CD4-positive, alpha-beta T cell (primary cell): ENCODE measurements at regions of chr9 and their contacts with region 1.

Region 1: GRCh38 chr9:127970401-127971313 is 10.1 kb downstream of the EEIG1 start:
- DNase-seq: peak; percentile 50 to 85 (median 70)
- ATAC-seq: peak; percentile 69
- H3K4me3 ChIP-seq: peak overlapping the region; percentile 67
- H3K4me3 Mint-ChIP-seq: peak overlapping the region; percentile 91
- H3K27ac ChIP-seq: peak overlapping the region; percentile 60 to 96
- H3K27ac Mint-ChIP-seq: peak overlapping the region; percentile 97
- H3K4me1 ChIP-seq: peaks cover 100% of the 10 kb centered on the region
- H3K4me1 Mint-ChIP-seq: peaks cover 100% of the 10 kb centered on the region
- H3K27me3 ChIP-seq: no peaks in the 10 kb centered on the region
- H3K27me3 Mint-ChIP-seq: no peaks in the 10 kb centered on the region
- CTCF ChIP-seq: no peak

Region 2: DNA sequence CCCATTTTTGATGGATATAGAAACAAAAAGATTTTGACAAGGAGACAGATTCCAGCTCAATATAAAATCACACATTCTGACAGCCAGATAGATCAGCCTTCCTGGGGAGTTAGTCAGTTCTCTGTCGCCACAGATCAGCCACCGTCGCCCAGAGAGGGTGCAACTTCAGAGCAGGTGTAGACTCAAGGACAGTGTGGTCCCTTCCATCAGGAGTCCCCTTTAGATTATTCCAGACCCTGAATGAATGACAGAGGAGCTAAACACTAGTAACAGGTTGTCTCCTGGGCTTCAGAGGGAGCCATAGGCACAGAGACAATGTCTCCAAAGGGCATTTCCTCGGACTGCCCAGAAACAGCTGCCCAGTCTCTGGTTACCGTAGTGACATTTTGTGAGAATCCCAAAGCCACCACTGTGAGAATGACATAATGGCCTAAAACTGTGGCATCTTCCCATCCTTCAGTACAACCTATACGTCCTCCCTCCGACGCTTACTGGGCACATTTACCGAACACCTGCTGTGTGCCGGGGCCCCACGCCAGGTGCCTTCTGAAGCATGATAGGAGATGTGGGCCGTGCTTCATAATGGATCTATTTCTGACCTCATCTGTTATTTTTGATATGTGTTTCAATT is 621.1 kb before region 1 on chr9:
- CTCF ChIA-PET with region 1: no interaction called
- POLR2A ChIA-PET with region 1: no interaction called
- intact Hi-C with region 1: no loop called
- DNase-seq: no peak
- ATAC-seq: no peak
- H3K4me3 ChIP-seq: no peak overlapping the region
- H3K4me3 Mint-ChIP-seq: no peak overlapping the region
- H3K27ac ChIP-seq: no peak overlapping the region
- H3K27ac Mint-ChIP-seq: no peak overlapping the region
- H3K4me1 ChIP-seq: no peaks in the 10 kb centered on the region
- H3K4me1 Mint-ChIP-seq: no peaks in the 10 kb centered on the region
- H3K27me3 ChIP-seq: peaks cover 5 to 11% of the 10 kb centered on the region in 2 experiments
- H3K27me3 Mint-ChIP-seq: peaks cover 66% of the 10 kb centered on the region
- CTCF ChIP-seq: no peak

Region 3: DNA sequence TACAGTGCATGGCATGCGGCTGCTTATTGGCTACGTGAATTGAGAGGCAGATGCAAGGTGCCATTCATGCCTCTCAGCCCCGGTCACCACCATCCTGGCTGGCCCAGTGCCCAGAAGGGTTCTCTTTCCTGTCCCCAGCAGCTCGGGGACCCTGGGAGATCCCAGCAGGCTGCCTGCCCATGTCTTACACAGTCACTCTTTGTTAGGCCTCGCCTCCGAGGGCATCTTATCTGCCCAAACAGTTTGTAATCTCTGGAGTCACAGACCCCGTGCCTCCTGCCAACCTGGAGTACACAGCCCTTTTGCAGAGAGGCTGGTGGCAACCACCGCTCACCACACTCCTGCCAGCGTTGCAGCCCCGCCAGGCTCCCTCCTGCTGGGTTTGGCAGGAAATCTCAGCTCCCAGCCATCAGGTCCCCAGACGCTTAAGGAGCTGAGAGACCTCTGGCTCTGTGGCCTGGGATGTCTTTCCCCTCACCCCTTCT is 86.2 kb before region 1 on chr9:
- CTCF ChIA-PET with region 1: no interaction called
- POLR2A ChIA-PET with region 1: no interaction called
- intact Hi-C with region 1: no loop called
- DNase-seq: no peak
- ATAC-seq: no peak
- H3K4me3 ChIP-seq: no peak overlapping the region
- H3K4me3 Mint-ChIP-seq: no peak overlapping the region
- H3K27ac ChIP-seq: no peak overlapping the region
- H3K27ac Mint-ChIP-seq: peak overlapping the region; percentile 44
- H3K4me1 ChIP-seq: peaks cover 6% of the 10 kb centered on the region
- H3K4me1 Mint-ChIP-seq: peaks cover 5% of the 10 kb centered on the region
- H3K27me3 ChIP-seq: no peaks in the 10 kb centered on the region
- H3K27me3 Mint-ChIP-seq: no peaks in the 10 kb centered on the region
- CTCF ChIP-seq: no peak

Region 4: GRCh38 chr9:127937388-127938280 is 33.0 kb before region 1 on chr9 and contains the start of gene DPM2:
- CTCF ChIA-PET with region 1: interaction called, 13 read pairs
- POLR2A ChIA-PET with region 1: interaction called, 12 read pairs
- intact Hi-C with region 1: loop called in 1 of 2 experiments (anchors 5 kb)
- DNase-seq: peak; percentile 74 to 94 (median 84)
- ATAC-seq: peak; percentile 85
- H3K4me3 ChIP-seq: peak within 1 kb of the TSS; percentile 90
- H3K4me3 Mint-ChIP-seq: peak within 1 kb of the TSS; percentile 93
- H3K27ac ChIP-seq: peak within 1 kb of the TSS; percentile 48 to 80
- H3K27ac Mint-ChIP-seq: peak within 1 kb of the TSS; percentile 88
- H3K4me1 ChIP-seq: peaks cover 47% of the 10 kb centered on the region
- H3K4me1 Mint-ChIP-seq: peaks cover 63% of the 10 kb centered on the region
- H3K27me3 ChIP-seq: no peaks in the 10 kb centered on the region
- H3K27me3 Mint-ChIP-seq: no peaks in the 10 kb centered on the region
- CTCF ChIP-seq: no peak
- total RNA-seq, gene DPM2: 41.7 to 47.6 TPM

Region 5: GRCh38 chr9:127943731-127944144 is 26.9 kb before region 1 on chr9:
- CTCF ChIA-PET with region 1: interaction called, 13 read pairs
- POLR2A ChIA-PET with region 1: interaction called, 12 read pairs
- intact Hi-C with region 1: loop called in 1 of 2 experiments (anchors 5 kb)
- DNase-seq: peak; percentile 59 to 89 (median 72)
- ATAC-seq: peak; percentile 74
- H3K4me3 ChIP-seq: no peak overlapping the region
- H3K4me3 Mint-ChIP-seq: peak overlapping the region; percentile 12
- H3K27ac ChIP-seq: peak overlapping the region in 1 of 2 donors; percentile 14
- H3K27ac Mint-ChIP-seq: peak overlapping the region; percentile 88
- H3K4me1 ChIP-seq: peaks cover 58% of the 10 kb centered on the region
- H3K4me1 Mint-ChIP-seq: peaks cover 58% of the 10 kb centered on the region
- H3K27me3 ChIP-seq: no peaks in the 10 kb centered on the region
- H3K27me3 Mint-ChIP-seq: no peaks in the 10 kb centered on the region
- CTCF ChIP-seq: peak; percentile 77

Region 6: GRCh38 chr9:127960410-127961154 is 10.1 kb before region 1 on chr9:
- CTCF ChIA-PET with region 1: interaction called, 17 read pairs
- POLR2A ChIA-PET with region 1: interaction called, 272 read pairs
- intact Hi-C with region 1: loop called in 1 of 2 experiments (anchors 1 kb)
- DNase-seq: no peak
- ATAC-seq: no peak
- H3K4me3 ChIP-seq: no peak overlapping the region
- H3K4me3 Mint-ChIP-seq: peak overlapping the region; percentile 79
- H3K27ac ChIP-seq: peak overlapping the region; percentile 54 to 58
- H3K27ac Mint-ChIP-seq: peak overlapping the region; percentile 97
- H3K4me1 ChIP-seq: peaks cover 85% of the 10 kb centered on the region
- H3K4me1 Mint-ChIP-seq: peaks cover 96% of the 10 kb centered on the region
- H3K27me3 ChIP-seq: no peaks in the 10 kb centered on the region
- H3K27me3 Mint-ChIP-seq: no peaks in the 10 kb centered on the region
- CTCF ChIP-seq: no peak

Region 7: GRCh38 chr9:127980706-127981558 is 10.3 kb after region 1 on chr9 and contains the start of gene EEIG1:
- CTCF ChIA-PET with region 1: interaction called, 3 read pairs
- POLR2A ChIA-PET with region 1: interaction called, 110 read pairs
- intact Hi-C with region 1: loop called in 1 of 2 experiments (anchors 1 kb)
- DNase-seq: peak; percentile 95 to 99 (median 97)
- ATAC-seq: peak; percentile 88
- H3K4me3 ChIP-seq: peak within 1 kb of the TSS; percentile 67
- H3K4me3 Mint-ChIP-seq: peak within 1 kb of the TSS; percentile 96
- H3K27ac ChIP-seq: peak within 1 kb of the TSS; percentile 53 to 57
- H3K27ac Mint-ChIP-seq: peak within 1 kb of the TSS; percentile 99
- H3K4me1 ChIP-seq: peaks cover 58% of the 10 kb centered on the region
- H3K4me1 Mint-ChIP-seq: peaks cover 47% of the 10 kb centered on the region
- H3K27me3 ChIP-seq: no peaks in the 10 kb centered on the region
- H3K27me3 Mint-ChIP-seq: no peaks in the 10 kb centered on the region
- CTCF ChIP-seq: no peak
- total RNA-seq, gene EEIG1: 440 to 463 TPM

Region 8: GRCh38 chr9:128007566-128008138 is 37.0 kb after region 1 on chr9:
- CTCF ChIA-PET with region 1: no interaction called
- POLR2A ChIA-PET with region 1: interaction called, 168 read pairs
- intact Hi-C with region 1: loop called in 1 of 2 experiments (anchors 1 kb)
- DNase-seq: peak; percentile 82 to 97 (median 91)
- ATAC-seq: peak; percentile 87
- H3K4me3 ChIP-seq: peak overlapping the region; percentile 37
- H3K4me3 Mint-ChIP-seq: peak overlapping the region; percentile 76
- H3K27ac ChIP-seq: peak overlapping the region; percentile 65 to 97
- H3K27ac Mint-ChIP-seq: peak overlapping the region; percentile 96
- H3K4me1 ChIP-seq: peaks cover 89% of the 10 kb centered on the region
- H3K4me1 Mint-ChIP-seq: peaks cover 81% of the 10 kb centered on the region
- H3K27me3 ChIP-seq: no peaks in the 10 kb centered on the region
- H3K27me3 Mint-ChIP-seq: no peaks in the 10 kb centered on the region
- CTCF ChIP-seq: no peak

Region 9: DNA sequence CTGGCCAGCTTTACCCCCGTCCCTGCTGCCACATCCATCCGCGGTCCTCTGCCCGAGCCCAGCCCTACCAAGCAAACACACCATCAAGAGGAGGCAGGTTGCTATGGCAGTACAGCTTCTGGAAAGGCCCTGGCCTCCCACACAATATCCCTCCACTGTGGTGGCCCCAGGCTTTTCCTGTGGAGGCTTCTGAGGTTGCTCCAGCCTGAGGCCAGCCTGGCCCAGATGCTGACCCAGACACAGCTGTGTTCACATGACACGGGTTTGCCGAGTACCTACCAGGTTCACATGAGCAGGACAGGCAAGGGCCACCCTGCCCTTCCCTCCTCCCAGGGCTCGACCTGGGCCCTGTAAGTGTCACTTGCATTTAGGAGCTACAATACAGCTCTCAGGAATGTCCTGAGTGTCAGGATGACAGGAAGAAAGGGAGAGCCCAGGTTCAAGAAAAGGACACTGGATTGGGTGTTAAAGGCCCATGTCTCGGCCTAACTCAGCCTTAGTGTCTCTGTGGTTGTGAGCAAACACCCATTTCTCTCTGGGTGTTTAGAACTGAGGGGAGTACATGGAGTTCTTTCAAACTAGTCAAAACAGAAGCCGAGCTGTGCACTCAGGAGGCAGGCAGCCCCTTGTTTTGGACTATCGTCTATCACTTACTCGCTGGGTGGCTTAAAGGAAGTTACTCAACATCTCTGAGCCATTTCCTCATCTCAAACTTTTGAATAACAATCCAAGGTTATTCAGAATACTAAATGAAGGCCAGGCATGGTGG is 56.3 kb after region 1 on chr9:
- CTCF ChIA-PET with region 1: interaction called, 4 read pairs
- POLR2A ChIA-PET with region 1: interaction called, 1,020 read pairs
- intact Hi-C with region 1: loop called in 1 of 2 experiments (anchors 2 kb)
- DNase-seq: peak in 13 of 14 experiments; percentile 30 to 75 (median 48)
- ATAC-seq: peak; percentile 10
- H3K4me3 ChIP-seq: peak overlapping the region; percentile 50
- H3K4me3 Mint-ChIP-seq: peak overlapping the region; percentile 80
- H3K27ac ChIP-seq: peak overlapping the region; percentile 93 to 94
- H3K27ac Mint-ChIP-seq: peak overlapping the region; percentile 94
- H3K4me1 ChIP-seq: peaks cover 100% of the 10 kb centered on the region
- H3K4me1 Mint-ChIP-seq: peaks cover 92% of the 10 kb centered on the region
- H3K27me3 ChIP-seq: no peaks in the 10 kb centered on the region
- H3K27me3 Mint-ChIP-seq: no peaks in the 10 kb centered on the region
- CTCF ChIP-seq: no peak

Region 10: DNA sequence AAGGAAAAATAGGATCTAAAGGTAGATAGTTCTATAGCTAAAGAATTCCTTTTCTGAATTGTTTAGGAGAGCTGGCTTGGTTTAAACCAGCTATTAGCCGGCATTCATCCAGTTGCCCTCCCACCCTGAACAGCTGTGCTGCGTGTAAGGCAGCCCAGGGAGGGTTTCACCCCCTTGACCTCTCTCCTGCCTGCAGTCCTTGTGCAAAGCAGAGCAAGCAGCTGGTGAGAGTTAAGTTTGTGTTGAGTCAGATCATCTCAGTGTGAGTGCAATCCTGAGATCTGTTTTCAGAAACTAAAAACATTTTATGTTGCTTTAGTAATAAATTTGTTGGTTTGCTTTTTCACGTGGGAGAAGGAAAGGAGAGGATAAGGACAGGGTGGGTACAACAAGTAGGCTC is 110.4 kb after region 1 on chr9:
- CTCF ChIA-PET with region 1: no interaction called
- POLR2A ChIA-PET with region 1: no interaction called
- intact Hi-C with region 1: no loop called
- DNase-seq: no peak
- ATAC-seq: no peak
- H3K4me3 ChIP-seq: no peak overlapping the region
- H3K4me3 Mint-ChIP-seq: no peak overlapping the region
- H3K27ac ChIP-seq: no peak overlapping the region
- H3K27ac Mint-ChIP-seq: peak overlapping the region; percentile 67
- H3K4me1 ChIP-seq: peaks cover 47% of the 10 kb centered on the region
- H3K4me1 Mint-ChIP-seq: peaks cover 57% of the 10 kb centered on the region
- H3K27me3 ChIP-seq: no peaks in the 10 kb centered on the region
- H3K27me3 Mint-ChIP-seq: no peaks in the 10 kb centered on the region
- CTCF ChIP-seq: no peak

Region 11: DNA sequence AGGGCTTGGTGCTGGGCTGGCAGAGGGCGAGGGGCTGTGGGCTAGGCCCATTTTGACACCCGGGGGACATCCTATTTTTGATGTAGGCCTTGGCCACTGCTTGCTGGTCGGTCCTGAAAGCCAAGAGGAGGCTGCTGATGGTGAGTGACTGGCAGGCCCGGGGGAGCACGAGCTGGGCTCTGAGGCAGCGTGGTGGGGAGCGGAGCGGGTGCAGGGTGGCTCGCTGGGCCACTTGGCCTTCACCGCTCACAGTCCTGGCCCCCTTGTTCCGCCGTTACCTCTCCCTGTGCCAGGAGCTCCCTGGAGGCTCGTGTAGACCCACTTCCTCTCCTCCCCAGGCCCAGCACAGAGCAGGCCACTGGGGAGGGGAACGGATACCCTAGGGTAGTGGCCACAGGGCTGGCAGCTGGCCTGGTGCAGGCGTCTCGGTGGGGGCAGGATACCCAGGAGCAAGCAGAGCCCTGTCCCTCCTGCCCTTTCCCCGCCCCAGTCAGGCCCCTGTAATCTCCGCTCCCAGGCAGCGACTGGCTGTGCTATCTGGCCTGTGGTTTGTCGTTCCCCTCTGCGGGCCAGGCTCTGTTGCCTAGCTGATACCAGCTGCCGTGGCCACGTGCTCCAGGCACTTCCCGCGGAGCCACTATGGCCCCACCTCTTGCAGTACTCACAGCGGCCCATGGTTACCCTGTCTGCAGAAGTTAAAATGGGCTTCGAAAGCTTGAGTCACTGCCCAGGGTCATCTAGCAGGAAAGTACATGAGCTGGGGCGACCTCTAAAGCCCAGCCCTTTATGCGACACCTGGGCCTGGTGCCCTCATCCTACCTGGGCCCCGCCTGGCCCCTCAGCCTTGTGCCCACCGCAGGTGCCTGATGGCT is 1098.6 kb after region 1 on chr9:
- CTCF ChIA-PET with region 1: no interaction called
- POLR2A ChIA-PET with region 1: no interaction called
- intact Hi-C with region 1: no loop called
- DNase-seq: peak; percentile 21 to 84 (median 53)
- ATAC-seq: peak; percentile 90
- H3K4me3 ChIP-seq: no peak overlapping the region
- H3K4me3 Mint-ChIP-seq: peak overlapping the region; percentile 74
- H3K27ac ChIP-seq: peak overlapping the region; percentile 9 to 52
- H3K27ac Mint-ChIP-seq: peak overlapping the region; percentile 88
- H3K4me1 ChIP-seq: peaks cover 63% of the 10 kb centered on the region
- H3K4me1 Mint-ChIP-seq: peaks cover 35% of the 10 kb centered on the region
- H3K27me3 ChIP-seq: no peaks in the 10 kb centered on the region
- H3K27me3 Mint-ChIP-seq: no peaks in the 10 kb centered on the region
- CTCF ChIP-seq: no peak